ENCODE measurements at regions of chr19 and their contacts with region 1.

Region 1: GRCh38 chr19:19900729-19901444 is at the start of gene ZNF93:
- DNase-seq: peak; percentile 80 to 93 (median 88)
- H3K4me3 ChIP-seq: peak within 1 kb of the TSS; percentile 91
- H3K4me3 Mint-ChIP-seq: peak within 1 kb of the TSS; percentile 90 to 99 (median 95)
- H3K27ac ChIP-seq: peak within 1 kb of the TSS; percentile 71
- H3K27ac Mint-ChIP-seq: peak within 1 kb of the TSS; percentile 45 to 96 (median 93)
- H3K4me1 ChIP-seq: peaks cover 8% of the 10 kb centered on the region
- H3K4me1 Mint-ChIP-seq: peaks cover 23 to 44% (median 32%) of the 10 kb centered on the region in 3 donors
- H3K27me3 ChIP-seq: no peaks in the 10 kb centered on the region
- H3K27me3 Mint-ChIP-seq: no peaks in the 10 kb centered on the region
- total RNA-seq, gene ZNF93: 8.6 to 9.1 TPM

Region 2: GRCh38 chr19:19711306-19711933 is 189.5 kb before region 1 on chr19:
- CTCF ChIA-PET with region 1: no interaction called
- POLR2A ChIA-PET with region 1: no interaction called
- DNase-seq: no peak
- H3K4me3 ChIP-seq: peak overlapping the region; percentile 9
- H3K4me3 Mint-ChIP-seq: no peak overlapping the region
- H3K27ac ChIP-seq: no peak overlapping the region
- H3K27ac Mint-ChIP-seq: no peak overlapping the region
- H3K4me1 ChIP-seq: no peaks in the 10 kb centered on the region
- H3K4me1 Mint-ChIP-seq: peaks cover 0 to 2% (median 2%) of the 10 kb centered on the region in 3 donors
- H3K27me3 ChIP-seq: no peaks in the 10 kb centered on the region
- H3K27me3 Mint-ChIP-seq: no peaks in the 10 kb centered on the region

Region 3: DNA sequence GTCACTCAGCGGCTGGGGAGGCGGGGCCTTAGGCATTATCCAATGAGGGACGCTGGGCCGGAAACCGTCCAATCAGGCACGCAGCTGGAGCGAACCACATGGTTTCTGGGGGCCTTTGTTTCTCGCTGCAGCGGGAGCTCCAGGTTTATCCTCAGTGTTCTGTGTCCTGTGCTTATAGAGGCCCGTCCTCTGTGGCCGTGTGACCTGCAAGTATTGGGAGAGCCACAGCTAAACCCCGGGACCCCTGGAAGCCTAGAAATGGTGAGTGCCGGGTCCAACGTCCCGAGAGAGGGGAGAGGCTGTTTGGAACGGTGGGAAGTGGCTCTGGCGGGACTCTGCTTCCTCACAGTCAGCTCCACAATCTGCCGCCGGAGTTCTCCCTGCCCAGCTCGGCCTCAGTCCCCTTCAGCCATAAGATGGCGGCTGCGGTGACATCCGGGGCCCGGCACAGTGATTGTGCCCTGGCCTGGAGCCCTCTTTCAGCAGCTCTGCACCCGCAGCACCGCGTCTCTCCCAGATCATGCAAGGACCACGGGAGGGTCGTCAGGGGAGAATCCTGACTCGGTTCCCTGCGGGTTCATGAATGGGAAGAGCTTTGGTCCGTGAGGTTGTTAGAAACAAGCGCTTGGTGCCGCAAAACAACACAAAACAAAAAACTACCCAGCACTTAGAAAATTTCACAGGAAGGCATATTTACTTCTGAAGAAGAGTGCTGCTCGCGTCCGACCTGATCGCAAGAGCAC is 35.0 kb before region 1 on chr19 and contains the start of gene ZNF253:
- CTCF ChIA-PET with region 1: interaction called, 7 read pairs
- POLR2A ChIA-PET with region 1: interaction called, 25 read pairs
- DNase-seq: peak; percentile 89 to 95 (median 92)
- H3K4me3 ChIP-seq: peak within 1 kb of the TSS; percentile 98
- H3K4me3 Mint-ChIP-seq: peak within 1 kb of the TSS; percentile 98 to 100 (median 100)
- H3K27ac ChIP-seq: peak within 1 kb of the TSS; percentile 91
- H3K27ac Mint-ChIP-seq: peak within 1 kb of the TSS; percentile 90 to 99 (median 98)
- H3K4me1 ChIP-seq: peaks cover 18% of the 10 kb centered on the region
- H3K4me1 Mint-ChIP-seq: peaks cover 33 to 35% (median 33%) of the 10 kb centered on the region in 3 donors
- H3K27me3 ChIP-seq: no peaks in the 10 kb centered on the region
- H3K27me3 Mint-ChIP-seq: no peaks in the 10 kb centered on the region
- total RNA-seq, gene ZNF253: 14.0 to 16.1 TPM

Region 4: GRCh38 chr19:19884583-19884982 is 16.3 kb before region 1 on chr19:
- CTCF ChIA-PET with region 1: no interaction called
- POLR2A ChIA-PET with region 1: no interaction called
- DNase-seq: no peak
- H3K4me3 ChIP-seq: no peak overlapping the region
- H3K4me3 Mint-ChIP-seq: no peak overlapping the region
- H3K27ac ChIP-seq: no peak overlapping the region
- H3K27ac Mint-ChIP-seq: no peak overlapping the region
- H3K4me1 ChIP-seq: no peaks in the 10 kb centered on the region
- H3K4me1 Mint-ChIP-seq: peaks cover 0 to 3% (median 0%) of the 10 kb centered on the region in 3 donors
- H3K27me3 ChIP-seq: no peaks in the 10 kb centered on the region
- H3K27me3 Mint-ChIP-seq: no peaks in the 10 kb centered on the region